BJ (cell line): ENCODE measurements at regions of chr19 and their contacts with region 1.

Region 1: DNA sequence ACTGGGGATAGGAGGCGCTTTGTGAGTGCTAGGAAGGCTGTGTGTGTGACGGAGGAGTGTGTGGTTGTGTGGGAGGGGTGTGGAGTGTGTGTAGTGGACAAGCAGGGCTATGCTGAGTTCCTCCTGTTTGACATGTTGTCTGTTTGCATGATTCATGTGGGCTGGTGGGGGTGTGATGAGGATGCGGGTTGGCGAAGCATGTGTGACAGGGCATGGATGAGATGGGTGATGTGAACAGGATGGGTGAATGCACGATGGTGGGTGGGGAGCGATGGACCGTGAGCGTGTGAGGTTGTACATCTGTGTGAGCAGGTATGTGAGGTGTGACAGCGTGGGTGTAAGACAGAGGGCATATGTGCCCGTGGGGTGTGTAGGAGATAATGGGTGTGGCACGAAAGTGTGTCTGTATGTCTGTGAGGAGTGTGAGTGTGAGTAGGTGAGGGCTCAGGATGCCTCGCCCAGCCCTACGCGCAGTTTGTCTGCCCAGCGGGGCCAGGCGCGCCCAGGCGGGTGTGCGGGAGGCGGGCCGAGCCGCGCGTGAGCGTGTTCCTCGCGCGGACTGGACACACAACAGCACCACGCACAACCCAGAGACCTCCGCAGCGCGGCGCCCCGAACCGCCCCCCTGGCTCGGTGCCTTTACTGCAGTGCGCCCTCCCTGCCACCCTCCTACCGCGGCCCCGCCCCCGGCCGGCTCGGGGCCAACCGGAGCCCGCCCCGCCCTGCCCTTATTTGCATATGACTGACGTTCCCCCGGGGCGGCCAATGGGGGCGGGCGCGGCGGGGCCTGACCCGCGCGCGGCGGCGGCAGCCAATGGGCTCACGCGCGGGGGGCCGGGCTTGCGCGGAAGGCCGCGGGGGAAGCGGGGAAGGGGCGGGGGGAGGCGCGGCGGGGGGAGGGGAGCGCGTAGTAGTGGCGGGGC is 14.4 kb downstream of the CIC start:
- DNase-seq: peak; percentile 60
- H3K4me3 ChIP-seq: peak overlapping the region; percentile 66
- H3K27me3 ChIP-seq: no peaks in the 10 kb centered on the region
- CTCF ChIP-seq: no peak

Region 2: DNA sequence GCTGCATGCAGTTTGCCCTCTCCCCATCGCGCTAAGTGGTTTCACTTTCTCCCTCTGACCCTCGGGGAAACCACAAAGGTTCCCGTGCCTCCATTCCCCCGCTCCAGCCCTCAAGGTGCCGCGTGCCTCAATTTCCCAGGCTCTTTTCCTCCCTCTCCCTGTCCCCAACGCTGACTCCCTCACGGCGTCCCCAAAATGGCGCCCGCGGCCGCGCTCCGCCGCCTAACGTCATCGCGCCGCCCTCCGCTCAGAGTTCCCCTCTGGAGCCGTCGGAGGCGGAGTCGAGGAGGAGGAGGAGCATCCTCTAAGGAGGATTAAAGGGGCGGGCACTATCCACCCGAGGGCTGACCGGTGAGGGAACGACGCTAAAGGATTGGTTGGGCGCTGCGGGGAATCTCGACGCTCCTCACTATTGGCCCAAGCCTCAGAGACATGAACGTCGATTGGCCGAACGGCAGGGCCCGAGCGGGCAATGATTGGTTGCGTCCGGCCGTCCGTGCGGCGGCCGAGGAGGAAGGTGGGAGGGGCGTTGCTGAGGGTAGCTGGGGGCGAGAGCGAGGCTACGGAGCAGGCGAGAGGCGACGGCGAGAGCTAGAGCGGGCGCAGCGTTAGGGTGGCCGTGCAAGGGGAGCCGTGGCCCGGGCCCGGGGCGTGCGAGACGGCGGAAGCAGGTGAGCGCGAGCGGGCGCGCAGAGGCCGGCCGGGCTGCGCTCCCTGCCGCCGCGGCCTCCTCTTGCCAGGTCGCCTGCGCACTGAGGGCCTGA is 207.6 kb before region 1 on chr19 and contains the start of gene ZNF574:
- CTCF ChIA-PET with region 1: no interaction called
- POLR2A ChIA-PET with region 1: interaction called, 11 read pairs
- DNase-seq: peak; percentile 97
- H3K4me3 ChIP-seq: peak within 1 kb of the TSS; percentile 89
- H3K27me3 ChIP-seq: 0 out of 2 replicates have a peak, but pooled peaks cover under 1% of the 10 kb centered on the region
- CTCF ChIP-seq: no peak
- polyA plus RNA-seq, gene ZNF574: 5.6 and 10.4 TPM in 2 replicates

Region 3: GRCh38 chr19:42254989-42255765 is 28.2 kb before region 1 on chr19 and contains the start of gene ERF:
- CTCF ChIA-PET with region 1: interaction called, 42 read pairs
- POLR2A ChIA-PET with region 1: no interaction called
- DNase-seq: peak; percentile 38
- H3K4me3 ChIP-seq: peak within 1 kb of the TSS; percentile 100
- H3K27me3 ChIP-seq: no peaks in the 10 kb centered on the region
- CTCF ChIP-seq: no peak
- polyA plus RNA-seq, gene ERF: 47.4 and 51.4 TPM in 2 replicates

Region 4: GRCh38 chr19:42268704-42269477 is 14.5 kb before region 1 on chr19 and contains the start of gene CIC:
- CTCF ChIA-PET with region 1: interaction called, 18 read pairs
- POLR2A ChIA-PET with region 1: interaction called, 5 read pairs
- DNase-seq: peak; percentile 100
- H3K4me3 ChIP-seq: peak within 1 kb of the TSS; percentile 87
- H3K27me3 ChIP-seq: no peaks in the 10 kb centered on the region
- CTCF ChIP-seq: no peak
- polyA plus RNA-seq, gene CIC: 3.5 and 7.0 TPM in 2 replicates

Region 5: GRCh38 chr19:42295831-42296525 is 12.6 kb after region 1 on chr19:
- CTCF ChIA-PET with region 1: interaction called, 14 read pairs
- POLR2A ChIA-PET with region 1: no interaction called
- DNase-seq: no peak
- H3K4me3 ChIP-seq: no peak overlapping the region
- H3K27me3 ChIP-seq: no peaks in the 10 kb centered on the region
- CTCF ChIP-seq: peak; percentile 98

Region 6: GRCh38 chr19:42324655-42325272 is 41.4 kb after region 1 on chr19:
- CTCF ChIA-PET with region 1: no interaction called
- POLR2A ChIA-PET with region 1: no interaction called
- DNase-seq: no peak
- H3K4me3 ChIP-seq: 0 out of 2 replicates have a peak overlapping the region, but pooled peaks have one; percentile 4
- H3K27me3 ChIP-seq: peaks cover 22% of the 10 kb centered on the region
- CTCF ChIP-seq: no peak